ENCODE measurements at regions of chr6 and their contacts with region 1.

Region 1: GRCh38 chr6:117602151-117602898 is at the start of gene GOPC:
- DNase-seq: peak; percentile 85
- ATAC-seq: peak; percentile 96
- H3K4me3 Mint-ChIP-seq: peak within 1 kb of the TSS; percentile 100
- H3K27ac Mint-ChIP-seq: peak within 1 kb of the TSS; percentile 99
- H3K4me1 Mint-ChIP-seq: peaks cover 46% of the 10 kb centered on the region
- H3K27me3 Mint-ChIP-seq: no peaks in the 10 kb centered on the region
- CTCF ChIP-seq: no peak
- total RNA-seq, gene GOPC: 17.1 and 19.5 TPM in 2 replicates

Region 2: GRCh38 chr6:116969211-116969863 is 633.0 kb before region 1 on chr6:
- CTCF ChIA-PET with region 1: no interaction called
- POLR2A ChIA-PET with region 1: no interaction called
- intact Hi-C with region 1: loop called (anchors 5 kb)
- DNase-seq: no peak
- ATAC-seq: no peak
- H3K4me3 Mint-ChIP-seq: no peak overlapping the region
- H3K27ac Mint-ChIP-seq: no peak overlapping the region
- H3K4me1 Mint-ChIP-seq: no peaks in the 10 kb centered on the region
- H3K27me3 Mint-ChIP-seq: peaks cover 10% of the 10 kb centered on the region
- CTCF ChIP-seq: peak; percentile 52

Region 3: DNA sequence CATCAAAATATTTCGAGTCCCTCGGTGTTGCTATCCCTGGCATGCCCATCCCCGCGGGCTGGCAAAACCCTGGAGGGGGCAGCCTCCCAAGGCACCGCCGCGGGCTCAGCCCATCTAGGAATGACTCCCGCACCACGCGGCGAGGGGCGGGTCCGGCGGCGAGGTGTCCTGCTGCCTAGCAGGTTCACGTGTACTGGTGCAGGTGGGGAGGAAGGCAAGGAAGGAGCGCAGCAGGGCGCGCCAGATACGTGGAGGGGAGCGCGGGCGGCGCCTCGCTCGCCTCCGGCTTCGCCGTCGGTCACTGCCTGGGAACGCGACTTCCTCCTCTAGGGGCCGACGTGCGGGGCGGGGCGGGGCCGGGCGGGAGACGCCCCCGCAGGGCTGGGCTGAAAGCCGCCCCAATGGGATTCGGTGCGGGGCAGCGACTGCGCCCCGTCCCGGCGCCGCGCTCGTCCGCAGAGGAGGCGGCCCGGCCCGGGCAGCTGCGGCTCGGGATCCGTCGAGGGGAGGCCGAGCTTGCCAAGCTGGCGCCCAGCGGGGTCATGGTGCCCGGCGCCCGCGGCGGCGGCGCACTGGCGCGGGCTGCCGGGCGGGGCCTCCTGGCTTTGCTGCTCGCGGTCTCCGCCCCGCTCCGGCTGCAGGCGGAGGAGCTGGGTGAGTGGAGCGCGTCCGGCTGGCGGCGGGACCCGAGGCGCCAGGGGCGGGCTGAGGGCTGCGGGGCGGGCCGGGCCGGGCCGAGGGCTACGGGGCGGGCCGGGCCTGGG is 119.9 kb before region 1 on chr6 and contains the start of gene DCBLD1:
- CTCF ChIA-PET with region 1: interaction called, 3 read pairs
- POLR2A ChIA-PET with region 1: no interaction called
- intact Hi-C with region 1: loop called (anchors 1 kb)
- DNase-seq: peak; percentile 50
- ATAC-seq: peak; percentile 89
- H3K4me3 Mint-ChIP-seq: peak within 1 kb of the TSS; percentile 79
- H3K27ac Mint-ChIP-seq: no peak within 1 kb of the TSS
- H3K4me1 Mint-ChIP-seq: peaks cover 17% of the 10 kb centered on the region
- H3K27me3 Mint-ChIP-seq: peaks cover 42% of the 10 kb centered on the region
- CTCF ChIP-seq: no peak
- total RNA-seq, gene DCBLD1: 0.15 and 0.31 TPM in 2 replicates

Region 4: GRCh38 chr6:117615894-117616390 is 13.6 kb after region 1 on chr6:
- CTCF ChIA-PET with region 1: interaction called, 3 read pairs
- POLR2A ChIA-PET with region 1: interaction called, 3 read pairs
- intact Hi-C with region 1: loop called (anchors 2 kb)
- DNase-seq: no peak
- ATAC-seq: no peak
- H3K4me3 Mint-ChIP-seq: no peak overlapping the region
- H3K27ac Mint-ChIP-seq: peak overlapping the region; percentile 66
- H3K4me1 Mint-ChIP-seq: peaks cover 11% of the 10 kb centered on the region
- H3K27me3 Mint-ChIP-seq: peaks cover 9% of the 10 kb centered on the region
- CTCF ChIP-seq: no peak

Region 5: DNA sequence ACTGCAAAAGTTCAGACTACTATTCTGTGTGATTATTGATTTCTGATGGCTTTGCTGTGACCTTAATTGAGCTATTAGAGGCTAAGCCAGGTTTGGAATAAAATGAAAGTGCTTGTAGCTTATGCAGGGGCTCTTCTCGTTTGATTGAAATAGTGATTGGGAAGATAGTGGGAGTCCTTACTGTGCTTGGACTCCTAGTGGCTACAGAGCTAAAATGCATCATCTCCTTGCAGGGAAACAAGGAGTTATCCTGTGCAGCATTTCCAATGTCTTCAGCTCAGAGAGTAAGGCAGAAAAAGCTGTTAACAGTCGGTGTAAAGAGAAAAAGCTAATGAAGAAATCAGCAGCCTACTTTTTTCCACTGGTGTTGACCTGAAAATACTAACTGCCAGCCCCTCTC is 478.2 kb after region 1 on chr6:
- CTCF ChIA-PET with region 1: no interaction called
- POLR2A ChIA-PET with region 1: no interaction called
- intact Hi-C with region 1: no loop called
- DNase-seq: no peak
- ATAC-seq: no peak
- H3K4me3 Mint-ChIP-seq: no peak overlapping the region
- H3K27ac Mint-ChIP-seq: no peak overlapping the region
- H3K4me1 Mint-ChIP-seq: no peaks in the 10 kb centered on the region
- H3K27me3 Mint-ChIP-seq: no peaks in the 10 kb centered on the region
- CTCF ChIP-seq: no peak

Region 6: DNA sequence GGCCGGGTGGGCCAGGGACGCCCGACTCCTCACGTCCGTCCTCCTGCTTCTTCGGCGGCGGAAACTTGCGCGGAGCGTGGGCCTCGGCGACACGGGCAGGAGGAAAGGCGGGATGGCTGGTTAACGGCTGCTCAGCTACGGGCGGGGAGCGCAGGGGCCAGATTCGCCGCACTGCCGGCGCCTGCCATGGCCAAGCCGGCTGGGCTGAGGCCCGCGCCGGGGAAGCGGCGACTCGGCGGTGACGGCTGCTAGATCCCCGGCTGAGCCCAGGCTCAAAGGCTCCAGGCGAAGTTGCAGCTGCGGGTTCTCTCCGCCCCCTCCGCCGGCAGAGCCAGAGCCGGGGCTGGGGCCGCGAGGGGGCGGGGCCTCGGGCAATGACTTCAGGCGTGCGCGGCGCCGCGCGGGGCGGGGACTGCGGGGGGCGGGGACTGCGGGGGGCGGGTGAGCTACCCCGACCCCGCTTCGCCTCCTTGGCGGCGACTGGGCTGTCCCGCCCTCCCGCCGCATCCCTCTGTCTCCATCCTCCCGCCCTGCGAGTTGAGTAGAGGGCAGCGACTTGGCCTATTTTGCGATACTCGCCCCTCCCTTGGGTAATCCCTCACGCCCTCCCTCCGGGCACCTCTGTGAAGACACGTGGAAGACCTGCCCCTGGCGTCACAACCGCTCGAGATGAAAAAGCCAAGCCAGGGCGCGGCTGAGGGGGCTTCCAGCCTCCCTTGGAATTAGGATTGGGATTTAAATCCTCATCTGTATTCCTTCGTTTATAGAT is 1049.1 kb after region 1 on chr6 and contains the start of gene CEP85L:
- CTCF ChIA-PET with region 1: no interaction called
- POLR2A ChIA-PET with region 1: interaction called, 4 read pairs
- intact Hi-C with region 1: loop called (anchors 5 kb)
- DNase-seq: peak; percentile 85
- ATAC-seq: peak; percentile 91
- H3K4me3 Mint-ChIP-seq: peak within 1 kb of the TSS; percentile 98
- H3K27ac Mint-ChIP-seq: peak within 1 kb of the TSS; percentile 93
- H3K4me1 Mint-ChIP-seq: peaks cover 22% of the 10 kb centered on the region
- H3K27me3 Mint-ChIP-seq: no peaks in the 10 kb centered on the region
- CTCF ChIP-seq: no peak
- total RNA-seq, gene CEP85L: 14.6 and 21.8 TPM in 2 replicates

Region 7: GRCh38 chr6:119078376-119079282 is 1476.3 kb after region 1 on chr6 and contains the start of gene FAM184A:
- CTCF ChIA-PET with region 1: no interaction called
- POLR2A ChIA-PET with region 1: no interaction called
- intact Hi-C with region 1: loop called (anchors 10 kb)
- DNase-seq: peak; percentile 61
- ATAC-seq: peak; percentile 83
- H3K4me3 Mint-ChIP-seq: peak within 1 kb of the TSS; percentile 93
- H3K27ac Mint-ChIP-seq: no peak within 1 kb of the TSS
- H3K4me1 Mint-ChIP-seq: peaks cover 17% of the 10 kb centered on the region
- H3K27me3 Mint-ChIP-seq: peaks cover 16% of the 10 kb centered on the region
- CTCF ChIP-seq: no peak
- total RNA-seq, gene FAM184A: 0.24 and 1.1 TPM in 2 replicates

Measured in activated B cell treated with CpG ODN at 0.5 μM for 24 hours (primary cell).